T-cell (primary cell): ENCODE measurements at regions of chr13 and their contacts with region 1.

Region 1: DNA sequence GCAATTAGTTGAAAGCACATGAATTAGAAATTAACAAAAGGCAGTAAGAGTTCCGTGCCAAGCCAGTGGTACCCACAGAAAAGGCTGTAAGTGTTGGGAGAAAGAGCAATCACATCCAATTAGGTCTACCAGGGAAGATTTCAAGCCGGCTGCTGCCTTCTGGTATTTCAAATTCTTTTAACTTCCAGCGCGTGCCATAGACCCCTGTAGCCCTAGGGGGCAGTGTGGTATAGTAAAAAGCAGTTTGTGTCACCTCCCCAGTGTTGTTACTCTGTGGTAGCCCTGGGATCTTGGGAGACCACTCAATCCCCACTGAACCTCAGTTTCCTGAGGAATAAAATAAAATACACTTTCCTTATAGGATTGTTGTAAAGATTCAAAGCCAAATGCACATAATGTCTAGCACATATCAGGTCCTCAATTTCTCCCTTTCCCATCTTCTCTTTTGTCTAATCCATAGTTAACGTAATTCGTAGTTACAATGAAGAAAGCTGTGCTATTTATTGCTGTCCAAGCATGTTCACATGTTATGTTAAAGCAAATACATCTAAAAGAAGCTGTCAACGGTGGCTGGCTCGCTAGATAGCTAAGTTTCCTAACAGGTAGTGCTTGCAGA is 230.2 kb downstream of the TDRD3 start:
- DNase-seq: no peak
- ATAC-seq: no peak
- H3K4me3 ChIP-seq: no peak overlapping the region
- H3K4me3 Mint-ChIP-seq: no peak overlapping the region
- H3K27ac ChIP-seq: no peak overlapping the region
- H3K27ac Mint-ChIP-seq: no peak overlapping the region
- H3K4me1 ChIP-seq: no peaks in the 10 kb centered on the region
- H3K4me1 Mint-ChIP-seq: no peaks in the 10 kb centered on the region
- H3K27me3 ChIP-seq: no peaks in the 10 kb centered on the region
- H3K27me3 Mint-ChIP-seq: peaks cover 11 to 15% of the 10 kb centered on the region in 2 donors

Region 2: GRCh38 chr13:58655086-58655485 is 1972.1 kb before region 1 on chr13:
- CTCF ChIA-PET with region 1: no interaction called
- POLR2A ChIA-PET with region 1: interaction called in 1 of 2 experiments, 11 read pairs
- DNase-seq: no peak
- ATAC-seq: no peak
- H3K4me3 ChIP-seq: no peak overlapping the region
- H3K4me3 Mint-ChIP-seq: no peak overlapping the region
- H3K27ac ChIP-seq: no peak overlapping the region
- H3K27ac Mint-ChIP-seq: no peak overlapping the region
- H3K4me1 ChIP-seq: no peaks in the 10 kb centered on the region
- H3K4me1 Mint-ChIP-seq: no peaks in the 10 kb centered on the region
- H3K27me3 ChIP-seq: no peaks in the 10 kb centered on the region
- H3K27me3 Mint-ChIP-seq: no peaks in the 10 kb centered on the region

Region 3: GRCh38 chr13:59790626-59791025 is 836.6 kb before region 1 on chr13:
- CTCF ChIA-PET with region 1: no interaction called
- POLR2A ChIA-PET with region 1: no interaction called
- DNase-seq: no peak
- ATAC-seq: no peak
- H3K4me3 ChIP-seq: no peak overlapping the region
- H3K4me3 Mint-ChIP-seq: no peak overlapping the region
- H3K27ac ChIP-seq: no peak overlapping the region
- H3K27ac Mint-ChIP-seq: no peak overlapping the region
- H3K4me1 ChIP-seq: no peaks in the 10 kb centered on the region
- H3K4me1 Mint-ChIP-seq: no peaks in the 10 kb centered on the region
- H3K27me3 ChIP-seq: no peaks in the 10 kb centered on the region
- H3K27me3 Mint-ChIP-seq: no peaks in the 10 kb centered on the region

Region 4: DNA sequence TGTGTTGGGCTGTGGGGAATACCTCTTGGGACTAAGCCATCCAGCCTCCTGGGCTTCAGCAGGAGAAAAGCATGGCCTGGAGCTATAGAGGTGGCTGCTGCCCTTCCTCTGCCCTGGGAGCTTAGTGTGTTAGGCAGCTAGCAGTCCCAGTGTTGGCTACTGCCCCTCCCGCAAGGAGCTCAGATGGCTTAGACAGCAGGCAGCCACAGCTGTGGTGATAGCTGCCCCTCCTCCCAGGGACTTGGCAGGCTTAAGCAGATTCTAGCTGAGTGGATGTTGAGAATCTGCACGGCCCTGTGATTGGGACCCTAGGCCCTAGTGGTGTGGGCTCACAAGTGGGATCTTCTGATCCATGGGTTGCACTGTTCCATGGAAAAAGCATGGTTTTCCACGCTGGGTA is 34.3 kb after region 1 on chr13:
- CTCF ChIA-PET with region 1: no interaction called
- POLR2A ChIA-PET with region 1: no interaction called
- DNase-seq: no peak
- ATAC-seq: no peak
- H3K4me3 ChIP-seq: no peak overlapping the region
- H3K4me3 Mint-ChIP-seq: no peak overlapping the region
- H3K27ac ChIP-seq: no peak overlapping the region
- H3K27ac Mint-ChIP-seq: no peak overlapping the region
- H3K4me1 ChIP-seq: no peaks in the 10 kb centered on the region
- H3K4me1 Mint-ChIP-seq: no peaks in the 10 kb centered on the region
- H3K27me3 ChIP-seq: peaks cover 0 to 8% of the 10 kb centered on the region in 2 experiments
- H3K27me3 Mint-ChIP-seq: peaks cover 0 to 4% of the 10 kb centered on the region in 2 donors